ENCODE measurements at regions of chr16 and their contacts with region 1.

Region 1: DNA sequence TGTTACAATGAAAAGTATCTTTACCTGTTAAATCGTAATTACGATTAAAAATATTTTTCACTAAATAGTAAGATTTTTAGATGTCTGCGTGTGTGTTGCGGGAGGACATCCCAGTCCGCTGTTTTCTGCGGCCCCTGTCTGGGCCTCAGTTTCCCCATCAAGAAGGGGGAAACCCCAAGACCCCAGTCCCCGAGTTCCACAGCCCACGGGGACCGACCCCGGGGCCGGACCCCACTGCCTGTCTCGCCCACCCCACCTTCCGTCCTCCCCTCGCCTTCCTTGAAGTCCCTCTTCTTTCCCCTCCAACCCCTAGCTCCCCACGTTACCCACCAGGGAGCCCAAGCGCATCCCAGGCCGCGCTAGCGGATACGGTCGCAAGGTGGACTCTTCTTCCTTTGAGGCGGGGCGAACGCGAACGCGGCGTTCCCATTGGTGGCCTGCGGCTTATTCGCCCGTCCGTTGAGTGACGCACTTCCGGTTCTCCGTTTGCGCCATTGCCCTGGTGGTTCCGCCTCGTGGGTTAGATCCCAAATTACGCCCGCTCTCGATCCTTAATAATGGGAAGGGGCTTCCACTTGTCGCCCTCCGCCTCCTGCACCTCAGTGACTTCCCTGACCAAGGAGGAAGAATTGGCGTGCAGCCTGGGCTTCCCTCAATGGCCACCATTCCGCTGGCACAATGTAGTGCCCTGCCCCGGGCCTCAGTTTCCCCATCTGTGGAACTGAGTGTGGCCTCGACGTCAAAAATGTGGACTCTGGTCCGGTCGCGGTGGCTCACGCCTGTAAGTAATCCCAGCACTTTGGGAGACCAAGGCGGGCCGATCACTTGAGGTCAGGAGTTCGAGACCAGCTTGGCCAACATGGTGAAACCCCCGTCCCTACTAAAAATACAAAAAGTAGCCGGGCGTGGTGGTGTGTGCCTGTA is at the start of gene NSMCE1:
- DNase-seq: peak; percentile 83 to 93 (median 92)
- ATAC-seq: peak; percentile 99
- H3K4me3 ChIP-seq: peak within 1 kb of the TSS; percentile 92
- H3K4me3 Mint-ChIP-seq: peak within 1 kb of the TSS; percentile 92 to 99 (median 96)
- H3K27ac ChIP-seq: peak within 1 kb of the TSS; percentile 87
- H3K27ac Mint-ChIP-seq: peak within 1 kb of the TSS; percentile 94 to 99 (median 99)
- H3K4me1 ChIP-seq: peaks cover 15 to 36% of the 10 kb centered on the region in 2 donors
- H3K4me1 Mint-ChIP-seq: peaks cover 41 to 95% (median 74%) of the 10 kb centered on the region in 7 donors
- H3K27me3 ChIP-seq: no peaks in the 10 kb centered on the region
- H3K27me3 Mint-ChIP-seq: no peaks in the 10 kb centered on the region
- total RNA-seq, gene NSMCE1: 45.5 to 106 (median 70.2) TPM

Region 2: DNA sequence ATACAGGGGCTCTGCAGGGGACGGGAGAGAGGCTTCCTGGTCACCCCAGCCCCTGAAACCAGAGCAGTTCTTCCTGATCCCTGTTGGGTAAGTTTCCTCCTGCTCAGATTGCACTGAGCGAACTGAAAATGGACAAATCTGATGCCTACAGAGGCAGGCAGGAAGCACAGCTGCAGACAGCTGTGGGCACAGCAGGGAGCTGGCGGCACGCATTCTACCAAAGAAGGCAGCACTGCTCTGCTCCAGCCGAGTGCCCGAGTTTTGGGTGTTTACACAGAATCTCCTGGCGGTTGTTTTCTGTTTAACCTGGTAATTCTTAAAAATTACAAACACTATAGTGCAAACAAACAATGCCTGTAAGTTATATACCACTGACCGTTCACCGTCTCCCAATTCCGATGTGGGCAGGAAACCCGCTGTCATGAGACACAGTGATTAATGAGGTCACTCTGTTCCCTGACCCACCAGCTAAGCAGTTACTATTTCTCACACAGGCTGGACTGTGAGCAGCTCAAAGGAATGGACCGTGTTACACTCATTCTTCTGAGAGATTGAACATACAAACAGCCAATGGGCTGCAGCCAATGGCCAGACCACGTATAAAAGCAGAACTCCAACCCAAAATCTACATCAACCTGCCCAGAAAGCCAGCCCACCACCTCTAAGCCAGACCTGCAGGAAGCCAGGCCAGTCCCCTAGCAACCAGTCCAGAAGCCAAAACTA is 25.6 kb before region 1 on chr16:
- CTCF ChIA-PET with region 1: no interaction called
- POLR2A ChIA-PET with region 1: interaction called, 21 read pairs
- intact Hi-C with region 1: no loop called
- DNase-seq: peak in 7 of 9 donors; percentile 21 to 52 (median 39)
- ATAC-seq: peak; percentile 68
- H3K4me3 ChIP-seq: peak overlapping the region; percentile 38
- H3K4me3 Mint-ChIP-seq: peak overlapping the region in 9 of 10 donors; percentile 46 to 76 (median 66)
- H3K27ac ChIP-seq: no peak overlapping the region
- H3K27ac Mint-ChIP-seq: peak overlapping the region; percentile 56 to 95 (median 85)
- H3K4me1 ChIP-seq: peaks cover 6 to 25% of the 10 kb centered on the region in 2 donors
- H3K4me1 Mint-ChIP-seq: peaks cover 53 to 90% (median 82%) of the 10 kb centered on the region in 7 donors
- H3K27me3 ChIP-seq: no peaks in the 10 kb centered on the region
- H3K27me3 Mint-ChIP-seq: no peaks in the 10 kb centered on the region

Region 3: DNA sequence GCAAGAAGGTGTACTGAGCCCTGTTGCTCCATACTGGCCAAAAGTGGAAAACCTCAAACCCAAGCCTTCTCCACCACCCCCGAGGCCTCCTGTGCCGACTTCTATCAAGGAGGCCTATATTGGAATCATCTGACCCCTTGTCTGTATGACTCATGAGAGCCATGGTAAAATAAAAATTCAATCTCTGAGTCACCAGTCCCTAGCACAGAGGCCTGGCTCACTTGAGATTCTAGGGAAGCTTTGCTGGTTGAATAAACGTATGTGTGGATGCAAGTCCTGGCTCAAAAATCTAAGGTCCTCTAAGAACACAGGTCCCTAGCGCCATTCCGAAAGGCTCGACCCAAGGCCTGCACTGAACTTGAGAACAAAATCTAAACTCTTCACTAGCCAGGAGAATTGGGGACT is 15.1 kb before region 1 on chr16:
- CTCF ChIA-PET with region 1: no interaction called
- POLR2A ChIA-PET with region 1: interaction called, 8 read pairs
- intact Hi-C with region 1: loop called (anchors 1 to 2 kb)
- DNase-seq: peak in 1 of 9 donors; percentile 41
- ATAC-seq: no peak
- H3K4me3 ChIP-seq: peak overlapping the region; percentile 11
- H3K4me3 Mint-ChIP-seq: peak overlapping the region in 9 of 10 donors; percentile 54 to 76 (median 65)
- H3K27ac ChIP-seq: peak overlapping the region; percentile 47
- H3K27ac Mint-ChIP-seq: peak overlapping the region; percentile 49 to 95 (median 85)
- H3K4me1 ChIP-seq: peaks cover 4 to 31% of the 10 kb centered on the region in 2 donors
- H3K4me1 Mint-ChIP-seq: peaks cover 40 to 81% (median 77%) of the 10 kb centered on the region in 7 donors
- H3K27me3 ChIP-seq: no peaks in the 10 kb centered on the region
- H3K27me3 Mint-ChIP-seq: no peaks in the 10 kb centered on the region

Region 4: DNA sequence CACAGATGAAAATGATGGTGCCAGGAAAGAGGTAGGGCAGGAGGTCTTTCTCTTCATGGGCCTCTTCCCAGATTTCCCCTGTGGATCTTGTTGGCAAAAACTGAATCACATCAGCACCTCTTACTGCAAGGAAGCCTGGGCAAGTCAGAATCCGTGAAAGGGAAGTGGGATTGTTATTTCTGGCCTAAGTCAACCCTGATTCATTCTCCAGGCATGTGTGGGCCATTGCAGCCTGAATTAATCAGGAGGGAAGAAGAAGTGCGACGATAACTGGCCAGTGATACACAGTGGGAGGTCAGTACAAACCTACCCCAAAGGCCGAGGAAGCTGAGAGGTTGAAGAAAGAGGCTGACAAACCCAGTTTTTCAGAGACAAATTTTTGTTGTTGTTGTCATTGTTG is 17.8 kb after region 1 on chr16:
- CTCF ChIA-PET with region 1: no interaction called
- POLR2A ChIA-PET with region 1: interaction called, 8 read pairs
- intact Hi-C with region 1: loop called in 1 of 2 experiments (anchors 2 kb)
- DNase-seq: no peak
- ATAC-seq: peak; percentile 61
- H3K4me3 ChIP-seq: no peak overlapping the region
- H3K4me3 Mint-ChIP-seq: peak overlapping the region in 1 of 10 donors; percentile 27
- H3K27ac ChIP-seq: no peak overlapping the region
- H3K27ac Mint-ChIP-seq: peak overlapping the region in 8 of 9 donors; percentile 16 to 93 (median 42)
- H3K4me1 ChIP-seq: peaks cover 0 to 50% of the 10 kb centered on the region in 2 donors
- H3K4me1 Mint-ChIP-seq: peaks cover 41 to 90% (median 80%) of the 10 kb centered on the region in 7 donors
- H3K27me3 ChIP-seq: no peaks in the 10 kb centered on the region
- H3K27me3 Mint-ChIP-seq: no peaks in the 10 kb centered on the region

Measured in naive thymus-derived CD4-positive, alpha-beta T cell (primary cell).